Left cardiac atrium (tissue), 4 donors: ENCODE measurements at regions of chr3 and their contacts with region 1.

Region 1: DNA sequence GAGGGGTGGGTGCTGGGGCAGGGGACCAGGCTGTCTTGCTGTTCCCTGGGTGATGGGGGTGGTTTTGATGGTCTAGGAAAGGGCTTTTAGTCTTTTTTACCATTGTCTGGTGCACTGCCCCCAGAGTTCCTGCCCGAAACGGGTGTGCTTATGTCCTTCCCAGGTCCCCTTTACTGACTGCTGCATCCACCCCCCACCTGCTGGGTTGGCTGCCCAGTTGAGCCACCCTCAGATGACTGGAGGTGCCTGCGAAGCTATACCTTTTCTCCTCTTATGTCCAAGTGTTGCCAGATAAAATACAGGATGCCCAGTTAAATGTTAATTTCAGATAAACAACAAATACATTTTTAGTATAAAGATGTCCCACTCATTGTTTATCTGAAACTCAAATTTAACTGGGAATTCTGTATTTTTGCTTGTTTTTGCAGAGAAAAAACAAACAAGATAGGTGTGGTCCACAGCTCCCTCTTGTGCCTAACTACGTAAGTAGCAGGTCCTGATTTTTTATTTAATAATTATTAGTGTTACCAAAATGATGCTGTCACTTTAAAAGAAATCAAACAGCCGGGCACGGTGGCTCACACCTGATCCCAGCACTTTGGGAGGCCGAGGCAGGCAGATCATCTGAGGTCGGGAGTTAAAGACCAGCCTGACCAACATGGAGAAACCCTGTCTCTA is 6.1 kb upstream of the RPP14 start:
- DNase-seq: no peak
- ATAC-seq: peak in 1 of 2 donors; percentile 31

Region 2: DNA sequence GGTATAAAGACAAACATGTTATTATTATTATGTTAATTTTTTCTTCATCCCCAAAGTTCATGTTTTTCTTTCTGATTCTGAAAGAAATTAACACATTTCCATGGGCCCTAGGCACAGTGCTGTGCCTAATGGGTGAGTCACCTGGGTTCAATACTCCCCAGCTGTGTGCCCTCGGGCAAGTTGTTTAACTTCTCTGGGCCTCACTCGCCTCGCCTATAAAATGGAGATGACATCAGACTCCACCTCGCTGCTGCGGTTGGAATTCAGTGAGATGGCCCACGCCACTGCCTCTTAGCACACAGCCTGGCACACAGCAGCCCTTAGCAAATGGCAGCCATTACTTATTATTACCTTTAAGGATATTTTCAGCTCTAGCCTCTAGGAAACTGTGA is 111.8 kb before region 1 on chr3:
- intact Hi-C with region 1: loop called (anchors 1 to 5 kb)
- DNase-seq: no peak
- ATAC-seq: no peak

Region 3: GRCh38 chr3:58237238-58237940 is 62.6 kb before region 1 on chr3 and contains the start of gene ABHD6:
- intact Hi-C with region 1: loop called in 1 of 2 experiments (anchors 5 kb)
- DNase-seq: peak; percentile 80
- ATAC-seq: peak; percentile 92 to 97
- total RNA-seq, gene ABHD6: 7.0 to 11.7 TPM